Activated CD4-positive, alpha-beta memory T cell treated with anti-CD3 and anti-CD28 coated beads for 36 hours (primary cell): ENCODE measurements at regions of chr1 and their contacts with region 1.

Region 1: GRCh38 chr1:152141974-152142584 is 16.9 kb downstream of the RPTN start:
- DNase-seq: peak; percentile 41
- H3K4me3 Mint-ChIP-seq: no peak overlapping the region
- H3K27ac Mint-ChIP-seq: no peak overlapping the region
- H3K4me1 Mint-ChIP-seq: peaks cover 5% of the 10 kb centered on the region
- H3K27me3 Mint-ChIP-seq: peaks cover 41% of the 10 kb centered on the region

Region 2: DNA sequence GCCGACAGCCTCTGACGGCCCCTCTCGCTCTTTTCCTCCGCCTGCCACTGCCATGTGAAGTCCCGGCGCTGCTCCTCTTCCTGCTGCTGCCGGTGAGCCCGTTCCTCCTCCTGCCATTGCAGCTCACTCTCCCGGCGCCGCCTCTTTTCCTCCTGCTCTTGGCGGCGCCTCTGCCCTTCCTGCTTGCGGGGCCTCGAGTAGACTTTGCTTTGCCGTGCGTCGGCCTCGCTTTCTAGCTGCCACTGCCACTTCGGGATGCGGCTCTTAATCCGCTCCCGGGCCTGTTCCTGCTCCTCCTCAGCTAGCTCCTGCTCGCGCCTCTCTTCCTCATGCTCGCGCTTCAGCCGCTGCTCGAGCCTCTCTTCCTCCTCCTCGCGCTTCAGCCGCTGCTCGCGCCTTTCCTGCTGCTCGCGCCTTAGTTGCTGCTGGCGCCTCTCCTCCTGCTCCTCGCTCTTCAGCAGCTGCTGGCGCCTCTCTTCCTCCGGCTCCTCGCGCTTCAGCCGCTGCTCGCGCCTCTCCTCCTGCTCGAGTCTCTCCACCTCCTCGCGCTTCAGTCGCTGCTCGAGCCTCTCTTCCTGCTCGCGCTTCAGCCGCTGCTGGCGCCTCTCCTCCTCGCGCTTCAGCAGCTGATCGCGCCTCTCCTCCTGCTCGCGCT is 31.1 kb before region 1 on chr1:
- CTCF ChIA-PET with region 1: no interaction called
- POLR2A ChIA-PET with region 1: no interaction called
- intact Hi-C with region 1: loop called (anchors 2 kb)
- DNase-seq: peak; percentile 54
- H3K4me3 Mint-ChIP-seq: no peak overlapping the region
- H3K27ac Mint-ChIP-seq: no peak overlapping the region
- H3K4me1 Mint-ChIP-seq: no peaks in the 10 kb centered on the region
- H3K27me3 Mint-ChIP-seq: peaks cover 15% of the 10 kb centered on the region

Region 3: GRCh38 chr1:152127670-152128069 is 14.4 kb before region 1 on chr1:
- CTCF ChIA-PET with region 1: no interaction called
- POLR2A ChIA-PET with region 1: no interaction called
- intact Hi-C with region 1: no loop called
- DNase-seq: no peak
- H3K4me3 Mint-ChIP-seq: no peak overlapping the region
- H3K27ac Mint-ChIP-seq: no peak overlapping the region
- H3K4me1 Mint-ChIP-seq: no peaks in the 10 kb centered on the region
- H3K27me3 Mint-ChIP-seq: peaks cover 40% of the 10 kb centered on the region